ENCODE measurements at regions of chr12 and their contacts with region 1.

Region 1: GRCh38 chr12:49018261-49019119 is at the start of gene PRKAG1:
- DNase-seq: peak; percentile 97
- H3K4me3 ChIP-seq: peak within 1 kb of the TSS; percentile 50 to 77 (median 61)
- H3K27ac ChIP-seq: peak within 1 kb of the TSS; percentile 98
- H3K4me1 ChIP-seq: peaks cover 16% of the 10 kb centered on the region
- H3K27me3 ChIP-seq: no peaks in the 10 kb centered on the region
- CTCF ChIP-seq: peak; percentile 43 to 69
- POLR2A ChIP-seq: peak; percentile 95
- total RNA-seq, gene PRKAG1: 50.0 and 54.9 TPM in 2 replicates

Region 2: GRCh38 chr12:48716493-48717251 is 301.8 kb before region 1 on chr12 and contains the start of gene CCNT1:
- CTCF ChIA-PET with region 1: no interaction called
- POLR2A ChIA-PET with region 1: no interaction called
- dilution Hi-C with region 1: no loop called
- intact Hi-C with region 1: no loop called
- DNase-seq: peak; percentile 100
- H3K4me3 ChIP-seq: peak within 1 kb of the TSS; percentile 65 to 92 (median 71)
- H3K27ac ChIP-seq: peak within 1 kb of the TSS; percentile 90
- H3K4me1 ChIP-seq: peaks cover 16% of the 10 kb centered on the region
- H3K27me3 ChIP-seq: no peaks in the 10 kb centered on the region
- CTCF ChIP-seq: peak; percentile 10 to 31
- POLR2A ChIP-seq: peak; percentile 61
- total RNA-seq, gene CCNT1: 33.0 and 35.1 TPM in 2 replicates

Region 3: DNA sequence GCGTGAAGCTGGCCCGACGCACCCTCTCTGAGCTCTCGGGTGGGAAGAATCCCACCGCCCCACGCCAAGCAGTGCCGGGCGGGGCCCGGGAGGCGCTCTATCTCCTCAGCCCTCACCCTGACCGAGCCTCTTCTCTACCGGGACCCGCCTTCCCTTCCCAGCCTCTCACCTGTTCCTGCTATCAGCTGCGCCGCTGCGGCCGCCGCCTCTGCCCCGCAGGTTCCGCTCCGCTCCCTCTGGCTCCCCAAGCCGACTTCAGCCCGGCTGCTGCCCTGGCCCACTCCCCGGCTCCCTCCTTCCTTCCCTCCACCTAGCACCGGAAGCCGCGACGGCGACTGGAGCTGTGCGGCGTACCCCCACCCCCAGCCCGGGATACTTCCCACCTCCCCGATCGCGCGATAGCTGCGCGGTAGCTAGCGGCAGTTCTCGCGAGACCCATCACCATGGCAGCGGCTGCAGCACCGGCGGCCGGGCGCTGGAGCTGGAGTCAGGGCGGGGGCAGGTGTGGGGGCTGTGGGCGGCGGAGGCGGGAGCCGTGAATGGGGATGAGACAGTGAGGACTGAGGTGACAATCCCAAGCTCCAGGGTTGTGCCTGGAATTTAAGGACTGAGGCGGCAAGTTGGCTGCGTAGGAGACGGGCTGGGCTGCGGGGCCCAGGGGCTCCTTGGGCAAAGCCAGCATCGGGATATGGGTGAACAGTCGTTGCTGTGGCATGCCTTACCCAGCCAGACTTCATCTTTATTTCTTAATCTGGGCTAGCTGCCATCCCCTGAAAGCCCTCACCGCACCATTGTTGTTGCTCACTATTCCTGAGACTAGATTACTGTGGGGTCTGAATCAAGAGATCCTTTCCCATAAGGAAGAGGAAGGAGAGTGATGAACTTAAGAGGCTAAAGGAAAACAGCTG is 61.1 kb before region 1 on chr12 and contains the start of gene ARF3:
- CTCF ChIA-PET with region 1: no interaction called
- POLR2A ChIA-PET with region 1: no interaction called
- dilution Hi-C with region 1: no loop called
- intact Hi-C with region 1: loop called (anchors 2 kb)
- DNase-seq: peak; percentile 94
- H3K4me3 ChIP-seq: peak within 1 kb of the TSS; percentile 71 to 99 (median 90)
- H3K27ac ChIP-seq: peak within 1 kb of the TSS; percentile 76
- H3K4me1 ChIP-seq: peaks cover 31% of the 10 kb centered on the region
- H3K27me3 ChIP-seq: no peaks in the 10 kb centered on the region
- CTCF ChIP-seq: no peak
- POLR2A ChIP-seq: peak; percentile 54
- total RNA-seq, gene ARF3: 172 and 187 TPM in 2 replicates

Region 4: GRCh38 chr12:48988030-48988649 is 30.4 kb before region 1 on chr12:
- CTCF ChIA-PET with region 1: interaction called, 11 read pairs
- POLR2A ChIA-PET with region 1: no interaction called
- dilution Hi-C with region 1: no loop called
- intact Hi-C with region 1: no loop called
- DNase-seq: peak; percentile 61
- H3K4me3 ChIP-seq: no peak overlapping the region
- H3K27ac ChIP-seq: no peak overlapping the region
- H3K4me1 ChIP-seq: no peaks in the 10 kb centered on the region
- H3K27me3 ChIP-seq: peaks cover 53 to 60% of the 10 kb centered on the region in 2 experiments
- CTCF ChIP-seq: peak; percentile 92 to 93
- POLR2A ChIP-seq: no peak

Region 5: GRCh38 chr12:48995061-48995879 is 23.2 kb before region 1 on chr12:
- CTCF ChIA-PET with region 1: interaction called, 115 read pairs
- POLR2A ChIA-PET with region 1: no interaction called
- dilution Hi-C with region 1: no loop called
- intact Hi-C with region 1: loop called (anchors 1 kb)
- DNase-seq: peak; percentile 77
- H3K4me3 ChIP-seq: no peak overlapping the region
- H3K27ac ChIP-seq: no peak overlapping the region
- H3K4me1 ChIP-seq: peaks cover 11% of the 10 kb centered on the region
- H3K27me3 ChIP-seq: peaks cover 25 to 26% of the 10 kb centered on the region in 2 experiments
- CTCF ChIP-seq: peak; percentile 69 to 85
- POLR2A ChIP-seq: no peak

Region 6: DNA sequence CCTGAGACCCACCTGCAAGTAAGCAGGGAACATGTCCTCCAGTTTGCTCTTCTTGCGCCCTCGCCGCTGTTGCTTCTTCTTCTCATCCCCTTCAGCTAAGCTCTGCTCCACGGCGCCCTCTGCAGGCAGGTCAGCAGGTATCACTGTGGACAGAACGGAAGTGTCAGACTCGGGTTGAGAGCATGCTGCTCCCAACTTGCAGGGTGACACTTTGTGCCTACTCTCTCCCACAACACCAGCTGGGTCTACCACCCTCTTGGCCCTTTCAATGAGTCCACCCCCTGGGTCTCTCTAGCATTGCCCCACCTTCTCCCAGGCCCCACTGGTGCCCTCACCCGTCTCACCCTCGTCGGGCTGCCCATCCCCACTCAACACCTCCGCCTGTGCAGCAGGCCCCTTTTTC is 25.4 kb after region 1 on chr12:
- CTCF ChIA-PET with region 1: interaction called, 16 read pairs
- POLR2A ChIA-PET with region 1: no interaction called
- dilution Hi-C with region 1: no loop called
- intact Hi-C with region 1: no loop called
- DNase-seq: peak; percentile 39
- H3K4me3 ChIP-seq: no peak overlapping the region
- H3K27ac ChIP-seq: no peak overlapping the region
- H3K4me1 ChIP-seq: no peaks in the 10 kb centered on the region
- H3K27me3 ChIP-seq: no peaks in the 10 kb centered on the region
- CTCF ChIP-seq: peak; percentile 68 to 75
- POLR2A ChIP-seq: no peak

Region 7: GRCh38 chr12:49060237-49061156 is 42.0 kb after region 1 on chr12 and contains the start of gene KMT2D:
- CTCF ChIA-PET with region 1: interaction called, 4 read pairs
- POLR2A ChIA-PET with region 1: no interaction called
- dilution Hi-C with region 1: no loop called
- intact Hi-C with region 1: loop called (anchors 2 kb)
- DNase-seq: peak; percentile 92
- H3K4me3 ChIP-seq: peak within 1 kb of the TSS; percentile 73 to 97 (median 77)
- H3K27ac ChIP-seq: peak within 1 kb of the TSS; percentile 93
- H3K4me1 ChIP-seq: peaks cover 39% of the 10 kb centered on the region
- H3K27me3 ChIP-seq: no peaks in the 10 kb centered on the region
- CTCF ChIP-seq: peak; percentile 6 to 13
- POLR2A ChIP-seq: peak; percentile 85
- total RNA-seq, gene KMT2D: 106 and 120 TPM in 2 replicates

Measured in endothelial cell of umbilical vein (primary cell).